ENCODE measurements at regions of chr2 and their contacts with region 1.

Region 1: DNA sequence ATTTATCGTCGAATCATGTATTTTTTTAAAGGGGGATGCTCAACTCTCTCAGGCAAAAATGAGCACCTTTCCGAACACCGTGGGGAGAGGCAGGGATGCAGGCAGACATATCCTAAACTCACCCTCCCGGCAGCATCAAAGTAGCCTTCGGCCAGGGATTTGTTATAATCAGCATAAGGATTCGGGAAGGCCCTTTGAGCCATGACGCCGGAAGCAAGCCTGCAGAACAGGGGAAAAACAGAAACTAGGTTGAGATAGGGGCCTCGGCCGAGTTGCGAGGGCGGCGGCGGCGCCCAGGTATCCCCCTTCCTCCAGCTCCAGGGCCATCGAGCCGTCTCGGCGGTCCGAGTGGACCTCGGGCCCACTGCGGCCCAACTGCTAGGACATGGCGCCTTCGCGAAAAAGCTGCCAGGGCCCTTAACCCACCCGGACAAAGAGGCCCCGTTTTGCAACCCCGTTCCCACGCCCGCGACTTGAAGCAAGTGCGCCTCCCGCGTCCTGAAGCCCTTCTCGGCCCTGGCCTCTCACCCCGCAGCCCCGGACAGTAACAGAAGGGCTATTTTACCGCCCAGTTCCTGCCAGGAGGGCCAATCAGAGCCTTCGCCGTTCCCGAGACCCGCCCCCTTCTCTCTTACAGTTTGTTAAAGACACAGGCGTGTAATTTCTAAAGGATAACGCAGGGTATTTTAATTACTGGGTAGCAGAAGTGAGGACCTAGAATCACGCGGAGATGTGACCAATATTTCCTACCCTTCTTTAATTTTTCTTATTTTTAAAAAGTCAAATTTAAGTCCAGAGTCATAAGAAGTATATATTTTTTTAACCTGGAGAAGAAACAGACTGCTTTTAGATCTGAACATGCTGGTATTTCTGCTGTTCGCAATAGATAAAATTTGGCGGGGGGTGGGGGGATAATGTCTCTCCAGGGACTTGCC is at the start of gene LANCL1:
- DNase-seq: peak; percentile 96
- total RNA-seq, gene LANCL1: 36.8 to 42.0 TPM

Region 2: GRCh38 chr2:210421916-210422315 is 54.5 kb before region 1 on chr2:
- intact Hi-C with region 1: loop called in 1 of 2 experiments (anchors 1 kb)
- DNase-seq: no peak

Measured in posterior vena cava (tissue), 2 donors.